Calu3 (cell line): ENCODE measurements at regions of chr3 and their contacts with region 1.

Region 1: DNA sequence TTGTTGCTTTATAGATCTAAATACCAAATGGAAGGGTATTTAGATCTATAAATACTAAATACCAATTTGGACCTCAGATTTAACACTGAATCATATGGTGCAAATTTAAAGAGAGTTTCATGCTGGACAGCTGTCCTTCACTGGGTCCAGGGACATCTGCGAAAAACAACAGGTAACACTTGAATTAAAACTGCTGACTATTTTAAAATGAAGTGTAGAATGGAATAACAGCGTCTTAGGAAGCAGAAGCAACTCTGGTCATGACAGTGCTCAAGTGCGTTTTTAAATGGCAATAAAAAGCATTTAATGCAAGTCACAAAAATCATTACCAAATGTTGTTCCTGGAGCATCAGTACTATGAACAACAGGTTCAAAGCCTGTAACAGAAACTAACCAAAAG is 106.3 kb downstream of the TFG start:
- DNase-seq: no peak
- H3K4me3 Mint-ChIP-seq: no peak overlapping the region
- H3K27ac Mint-ChIP-seq: no peak overlapping the region
- H3K4me1 Mint-ChIP-seq: no peaks in the 10 kb centered on the region
- H3K27me3 Mint-ChIP-seq: no peaks in the 10 kb centered on the region
- CTCF ChIP-seq: no peak

Region 2: GRCh38 chr3:101325393-101326134 is 510.0 kb after region 1 on chr3:
- CTCF ChIA-PET with region 1: interaction called, 10 read pairs
- intact Hi-C with region 1: no loop called
- DNase-seq: no peak
- H3K4me3 Mint-ChIP-seq: no peak overlapping the region
- H3K27ac Mint-ChIP-seq: no peak overlapping the region
- H3K4me1 Mint-ChIP-seq: no peaks in the 10 kb centered on the region
- H3K27me3 Mint-ChIP-seq: no peaks in the 10 kb centered on the region
- CTCF ChIP-seq: no peak